CD4-positive, alpha-beta memory T cell (primary cell): ENCODE measurements at regions of chr1 and their contacts with region 1.

Region 1: DNA sequence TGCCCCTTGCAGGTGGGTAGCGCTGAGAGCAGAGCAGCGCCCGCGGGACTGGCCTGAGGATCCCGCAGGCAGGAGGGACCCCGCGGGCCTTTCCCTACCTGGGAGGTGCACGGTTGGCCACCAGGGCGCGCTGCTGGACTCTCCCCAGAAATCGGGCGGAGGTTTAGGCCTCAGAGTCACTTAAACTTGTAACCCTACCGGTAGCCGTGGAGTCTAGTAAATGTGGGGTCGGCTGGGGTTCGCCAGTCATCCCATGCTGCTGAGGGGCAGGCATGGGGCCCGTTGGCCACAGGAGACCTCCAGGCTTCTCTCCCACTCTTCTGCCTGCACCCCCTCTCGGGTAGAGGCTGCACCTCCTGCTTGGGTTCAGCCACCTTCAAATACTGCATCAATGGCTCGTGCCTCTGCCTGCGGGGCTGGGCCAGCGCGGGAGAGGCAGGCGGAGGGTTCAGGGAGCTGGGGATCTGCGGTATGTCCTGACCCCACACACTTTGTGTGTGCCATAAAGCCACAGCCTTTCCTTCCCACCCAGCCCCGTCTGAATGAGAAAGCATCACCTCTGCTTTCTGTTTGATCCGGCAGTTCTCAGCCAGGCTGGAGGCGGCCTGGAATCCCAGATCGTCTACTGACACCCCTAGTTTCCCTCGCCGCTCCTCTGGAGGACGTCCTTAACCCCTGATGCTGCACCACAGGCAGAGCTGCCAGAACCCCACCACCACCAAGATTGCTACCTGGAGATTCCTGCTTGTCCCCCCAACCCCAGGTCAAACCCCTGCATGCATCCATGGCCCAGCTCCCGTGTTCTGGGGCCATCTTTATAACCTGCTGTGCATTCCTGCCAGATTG is 12.3 kb upstream of the GSTM4 start:
- DNase-seq: peak; percentile 75 to 83 (median 79)
- H3K4me3 ChIP-seq: no peak overlapping the region
- H3K4me3 Mint-ChIP-seq: no peak overlapping the region
- H3K27ac ChIP-seq: no peak overlapping the region
- H3K27ac Mint-ChIP-seq: peak overlapping the region in 1 of 7 donors; percentile 42
- H3K4me1 ChIP-seq: peaks cover 14% of the 10 kb centered on the region
- H3K4me1 Mint-ChIP-seq: peaks cover 4 to 14% (median 8%) of the 10 kb centered on the region in 4 donors
- H3K27me3 ChIP-seq: no peaks in the 10 kb centered on the region
- H3K27me3 Mint-ChIP-seq: peaks cover 2% of the 10 kb centered on the region in 2 donors

Region 2: GRCh38 chr1:108816049-108816893 is 827.3 kb before region 1 on chr1:
- CTCF ChIA-PET with region 1: no interaction called
- POLR2A ChIA-PET with region 1: no interaction called
- intact Hi-C with region 1: no loop called
- DNase-seq: no peak
- H3K4me3 ChIP-seq: no peak overlapping the region
- H3K4me3 Mint-ChIP-seq: no peak overlapping the region
- H3K27ac ChIP-seq: no peak overlapping the region
- H3K27ac Mint-ChIP-seq: no peak overlapping the region
- H3K4me1 ChIP-seq: no peaks in the 10 kb centered on the region
- H3K4me1 Mint-ChIP-seq: no peaks in the 10 kb centered on the region
- H3K27me3 ChIP-seq: no peaks in the 10 kb centered on the region
- H3K27me3 Mint-ChIP-seq: peaks cover 2 to 5% of the 10 kb centered on the region in 2 donors

Region 3: GRCh38 chr1:109521002-109521951 is 122.3 kb before region 1 on chr1:
- CTCF ChIA-PET with region 1: no interaction called
- POLR2A ChIA-PET with region 1: no interaction called
- intact Hi-C with region 1: no loop called
- DNase-seq: no peak
- H3K4me3 ChIP-seq: no peak overlapping the region
- H3K4me3 Mint-ChIP-seq: no peak overlapping the region
- H3K27ac ChIP-seq: no peak overlapping the region
- H3K27ac Mint-ChIP-seq: no peak overlapping the region
- H3K4me1 ChIP-seq: no peaks in the 10 kb centered on the region
- H3K4me1 Mint-ChIP-seq: peaks cover 0 to 2% (median 0%) of the 10 kb centered on the region in 4 donors
- H3K27me3 ChIP-seq: no peaks in the 10 kb centered on the region
- H3K27me3 Mint-ChIP-seq: peaks cover 2% of the 10 kb centered on the region in 2 donors

Region 4: GRCh38 chr1:109598655-109599054 is 45.0 kb before region 1 on chr1:
- CTCF ChIA-PET with region 1: interaction called, 17 read pairs
- POLR2A ChIA-PET with region 1: no interaction called
- intact Hi-C with region 1: no loop called
- DNase-seq: no peak
- H3K4me3 ChIP-seq: no peak overlapping the region
- H3K4me3 Mint-ChIP-seq: no peak overlapping the region
- H3K27ac ChIP-seq: no peak overlapping the region
- H3K27ac Mint-ChIP-seq: peak overlapping the region in 2 of 7 donors; percentile 42 to 69
- H3K4me1 ChIP-seq: peaks cover 9% of the 10 kb centered on the region
- H3K4me1 Mint-ChIP-seq: peaks cover 9 to 18% (median 14%) of the 10 kb centered on the region in 4 donors
- H3K27me3 ChIP-seq: no peaks in the 10 kb centered on the region
- H3K27me3 Mint-ChIP-seq: no peaks in the 10 kb centered on the region

Region 5: GRCh38 chr1:109630081-109630897 is 13.3 kb before region 1 on chr1:
- CTCF ChIA-PET with region 1: interaction called, 140 read pairs
- POLR2A ChIA-PET with region 1: no interaction called
- intact Hi-C with region 1: no loop called
- DNase-seq: peak in 2 of 5 donors; percentile 21 to 39
- H3K4me3 ChIP-seq: no peak overlapping the region
- H3K4me3 Mint-ChIP-seq: no peak overlapping the region
- H3K27ac ChIP-seq: no peak overlapping the region
- H3K27ac Mint-ChIP-seq: peak overlapping the region in 4 of 7 donors; percentile 13 to 73 (median 54)
- H3K4me1 ChIP-seq: peaks cover 13% of the 10 kb centered on the region
- H3K4me1 Mint-ChIP-seq: peaks cover 9 to 15% (median 11%) of the 10 kb centered on the region in 4 donors
- H3K27me3 ChIP-seq: no peaks in the 10 kb centered on the region
- H3K27me3 Mint-ChIP-seq: no peaks in the 10 kb centered on the region

Region 6: DNA sequence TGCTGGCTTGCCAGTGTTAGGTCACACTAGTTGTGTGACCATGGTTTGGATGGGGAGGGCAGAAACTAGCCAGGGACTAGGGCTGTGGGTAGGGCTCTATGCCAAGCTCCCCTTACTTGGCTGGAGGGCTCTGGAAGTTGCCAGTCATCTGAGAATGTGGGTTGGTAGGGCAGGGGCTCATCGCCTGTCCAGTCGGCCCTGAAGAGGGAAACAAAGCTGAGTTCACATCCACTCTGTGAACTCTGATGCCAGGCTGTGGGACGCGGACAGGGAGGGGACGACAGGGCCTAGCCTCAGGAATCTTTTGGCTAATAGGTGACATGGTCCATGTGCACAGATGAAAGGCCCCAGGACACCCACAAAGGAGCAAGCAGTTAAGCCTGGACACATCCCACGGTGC is 109.4 kb after region 1 on chr1:
- CTCF ChIA-PET with region 1: interaction called, 10 read pairs
- POLR2A ChIA-PET with region 1: no interaction called
- intact Hi-C with region 1: no loop called
- DNase-seq: no peak
- H3K4me3 ChIP-seq: no peak overlapping the region
- H3K4me3 Mint-ChIP-seq: no peak overlapping the region
- H3K27ac ChIP-seq: no peak overlapping the region
- H3K27ac Mint-ChIP-seq: no peak overlapping the region
- H3K4me1 ChIP-seq: no peaks in the 10 kb centered on the region
- H3K4me1 Mint-ChIP-seq: no peaks in the 10 kb centered on the region
- H3K27me3 ChIP-seq: peaks cover 8% of the 10 kb centered on the region
- H3K27me3 Mint-ChIP-seq: peaks cover 3 to 14% of the 10 kb centered on the region in 2 donors

Region 7: GRCh38 chr1:109910123-109910962 is 266.7 kb after region 1 on chr1 and contains the start of gene CSF1:
- CTCF ChIA-PET with region 1: no interaction called
- POLR2A ChIA-PET with region 1: no interaction called
- intact Hi-C with region 1: loop called (anchors 5 kb)
- DNase-seq: peak; percentile 51 to 77 (median 58)
- H3K4me3 ChIP-seq: peak within 1 kb of the TSS; percentile 51 to 71
- H3K4me3 Mint-ChIP-seq: peak within 1 kb of the TSS; percentile 91 to 96 (median 94)
- H3K27ac ChIP-seq: peak within 1 kb of the TSS; percentile 57
- H3K27ac Mint-ChIP-seq: peak within 1 kb of the TSS; percentile 92 to 96 (median 94)
- H3K4me1 ChIP-seq: peaks cover 86% of the 10 kb centered on the region
- H3K4me1 Mint-ChIP-seq: peaks cover 54 to 84% (median 72%) of the 10 kb centered on the region in 4 donors
- H3K27me3 ChIP-seq: no peaks in the 10 kb centered on the region
- H3K27me3 Mint-ChIP-seq: peaks cover 0 to 1% of the 10 kb centered on the region in 2 donors
- total RNA-seq, gene CSF1: 10.3 to 13.9 TPM

Region 8: GRCh38 chr1:110460253-110461220 is 816.9 kb after region 1 on chr1:
- CTCF ChIA-PET with region 1: no interaction called
- POLR2A ChIA-PET with region 1: no interaction called
- intact Hi-C with region 1: loop called (anchors 5 kb)
- DNase-seq: peak; percentile 78 to 84 (median 83)
- H3K4me3 ChIP-seq: no peak overlapping the region
- H3K4me3 Mint-ChIP-seq: no peak overlapping the region
- H3K27ac ChIP-seq: no peak overlapping the region
- H3K27ac Mint-ChIP-seq: no peak overlapping the region
- H3K4me1 ChIP-seq: no peaks in the 10 kb centered on the region
- H3K4me1 Mint-ChIP-seq: no peaks in the 10 kb centered on the region
- H3K27me3 ChIP-seq: no peaks in the 10 kb centered on the region
- H3K27me3 Mint-ChIP-seq: peaks cover 0 to 2% of the 10 kb centered on the region in 2 donors